ENCODE measurements at regions of chr19 and their contacts with region 1.

Region 1: GRCh38 chr19:1825909-1826556 is 14.0 kb upstream of the ATP8B3 start:
- DNase-seq: no peak
- H3K4me3 ChIP-seq: no peak overlapping the region
- CTCF ChIP-seq: peak; percentile 96

Region 2: GRCh38 chr19:1526979-1527649 is 298.9 kb before region 1 on chr19:
- CTCF ChIA-PET with region 1: no interaction called
- POLR2A ChIA-PET with region 1: no interaction called
- DNase-seq: no peak
- H3K4me3 ChIP-seq: no peak overlapping the region
- CTCF ChIP-seq: no peak

Region 3: DNA sequence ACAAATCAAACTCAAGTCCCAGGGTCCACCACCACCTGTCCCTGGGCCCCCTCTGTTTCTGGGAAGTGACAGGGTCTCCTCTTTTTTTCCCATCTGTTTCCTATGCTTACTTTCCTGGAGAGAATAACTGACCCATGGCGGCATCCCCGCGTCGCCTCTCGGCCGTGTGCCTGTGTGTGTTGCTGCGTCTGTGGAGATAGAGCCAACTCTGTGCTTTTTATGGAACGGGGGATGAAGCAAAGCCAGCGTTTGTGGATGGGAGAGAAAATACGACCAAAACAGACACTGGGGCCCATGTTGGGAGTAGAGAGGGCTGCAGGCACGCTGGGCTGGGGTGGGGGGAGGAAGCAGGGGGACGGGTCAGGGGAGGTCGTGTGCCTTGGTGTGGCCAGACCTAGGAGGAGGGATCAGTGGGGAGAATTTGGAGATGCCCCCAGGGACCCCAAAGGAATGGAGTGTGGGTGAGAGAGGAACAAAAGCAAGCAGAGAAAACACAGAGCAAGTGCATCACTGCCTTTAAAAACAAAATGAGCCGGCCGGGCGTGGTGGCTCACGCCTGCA is 285.6 kb before region 1 on chr19:
- CTCF ChIA-PET with region 1: interaction called, 10 read pairs
- POLR2A ChIA-PET with region 1: no interaction called
- DNase-seq: no peak
- H3K4me3 ChIP-seq: no peak overlapping the region
- CTCF ChIP-seq: no peak

Region 4: DNA sequence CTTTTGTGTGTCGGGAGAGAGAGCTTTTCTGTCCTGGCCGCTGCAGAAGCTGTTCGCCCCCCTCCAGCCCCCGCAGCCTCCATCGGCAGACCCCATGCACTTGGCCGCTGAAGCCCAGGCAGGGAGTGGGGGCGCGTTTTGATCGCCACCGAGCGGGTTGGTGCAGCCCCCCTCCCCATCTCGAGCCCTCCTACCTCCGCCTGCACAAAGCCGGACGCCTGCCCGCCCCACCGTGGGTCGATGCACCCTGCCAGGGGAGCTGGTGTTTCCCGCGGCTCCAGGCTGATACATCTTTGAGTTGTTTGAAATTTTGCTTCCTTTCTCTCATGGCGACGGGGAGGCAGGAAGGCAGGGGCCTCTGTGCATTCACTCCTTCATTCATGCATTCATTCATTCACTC is 89.1 kb before region 1 on chr19:
- CTCF ChIA-PET with region 1: no interaction called
- POLR2A ChIA-PET with region 1: no interaction called
- DNase-seq: no peak
- H3K4me3 ChIP-seq: no peak overlapping the region
- CTCF ChIP-seq: no peak

Region 5: DNA sequence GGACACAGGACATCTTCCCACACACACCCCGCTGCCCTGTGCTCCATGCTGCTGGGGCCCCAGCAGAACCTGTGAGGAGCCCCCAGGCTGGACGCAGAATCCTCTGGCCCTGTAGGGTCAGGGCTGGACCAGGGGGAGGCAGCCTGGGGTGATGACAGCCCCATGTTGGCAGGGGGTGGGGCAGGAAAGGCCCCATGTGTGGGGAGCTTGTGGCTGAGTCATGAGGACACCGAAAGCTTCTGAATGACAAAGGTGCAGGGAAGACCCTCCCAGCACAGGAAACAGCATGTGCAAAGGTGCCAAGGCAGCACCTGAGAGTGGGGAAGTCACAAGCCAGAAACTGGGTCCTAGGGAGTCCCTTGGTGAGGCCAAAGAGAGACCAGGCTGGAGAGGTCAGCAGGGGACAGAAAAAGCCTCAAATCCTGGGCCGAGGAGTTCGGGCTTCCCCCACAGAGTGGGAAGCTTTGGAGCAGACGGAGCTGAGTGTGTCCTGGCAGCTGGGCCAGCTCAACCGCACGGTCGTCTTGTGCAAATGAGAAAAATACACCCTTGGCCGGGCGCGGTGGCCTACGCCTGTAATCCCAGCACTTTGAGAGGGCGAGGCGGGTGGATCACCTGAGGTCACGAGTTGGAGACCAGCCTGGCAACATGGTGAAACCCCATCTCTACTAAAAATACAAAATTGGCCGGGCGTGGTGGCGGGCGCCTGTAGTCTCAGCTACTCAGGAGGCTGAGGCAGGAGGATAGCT is 31.4 kb before region 1 on chr19:
- CTCF ChIA-PET with region 1: interaction called, 24 read pairs
- POLR2A ChIA-PET with region 1: no interaction called
- DNase-seq: no peak
- H3K4me3 ChIP-seq: no peak overlapping the region
- CTCF ChIP-seq: no peak

Region 6: GRCh38 chr19:1812469-1813196 is 13.4 kb before region 1 on chr19:
- CTCF ChIA-PET with region 1: interaction called, 39 read pairs
- POLR2A ChIA-PET with region 1: no interaction called
- DNase-seq: peak; percentile 36
- H3K4me3 ChIP-seq: peak overlapping the region; percentile 68
- CTCF ChIP-seq: peak; percentile 69

Region 7: DNA sequence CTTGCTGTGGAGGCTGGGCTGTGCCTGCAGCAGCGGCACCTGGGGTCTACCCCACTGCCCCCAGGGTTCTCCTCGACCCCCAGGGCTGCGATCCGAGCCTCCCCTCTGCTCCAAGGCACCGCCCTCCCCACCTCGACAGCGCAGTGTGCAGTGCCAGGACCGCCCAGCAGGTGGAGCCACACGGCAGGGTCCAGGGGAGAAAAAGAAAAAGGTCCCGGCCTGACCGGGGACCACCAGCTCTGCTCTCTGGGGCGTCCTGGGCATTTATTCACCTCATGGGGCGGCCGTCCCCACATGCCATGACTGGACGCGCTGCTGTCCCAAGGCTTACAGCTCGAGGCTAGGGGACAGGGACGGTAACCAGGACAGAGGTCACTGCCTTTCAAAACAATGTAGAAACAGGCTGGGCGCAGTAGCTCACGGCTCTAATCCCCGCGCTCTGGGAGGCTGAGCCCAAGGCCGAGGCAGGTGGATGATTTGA is 11.6 kb after region 1 on chr19:
- CTCF ChIA-PET with region 1: interaction called, 292 read pairs
- POLR2A ChIA-PET with region 1: no interaction called
- DNase-seq: no peak
- H3K4me3 ChIP-seq: no peak overlapping the region
- CTCF ChIP-seq: peak; percentile 95